Activated CD8-positive, alpha-beta T cell treated with anti-CD3 and anti-CD28 coated beads, Interleukin-2, amount 10 ng/mL, durations not matched to agents 7 days and 5 days (primary cell): ENCODE measurements at regions of chr11 and their contacts with region 1.

Region 1: DNA sequence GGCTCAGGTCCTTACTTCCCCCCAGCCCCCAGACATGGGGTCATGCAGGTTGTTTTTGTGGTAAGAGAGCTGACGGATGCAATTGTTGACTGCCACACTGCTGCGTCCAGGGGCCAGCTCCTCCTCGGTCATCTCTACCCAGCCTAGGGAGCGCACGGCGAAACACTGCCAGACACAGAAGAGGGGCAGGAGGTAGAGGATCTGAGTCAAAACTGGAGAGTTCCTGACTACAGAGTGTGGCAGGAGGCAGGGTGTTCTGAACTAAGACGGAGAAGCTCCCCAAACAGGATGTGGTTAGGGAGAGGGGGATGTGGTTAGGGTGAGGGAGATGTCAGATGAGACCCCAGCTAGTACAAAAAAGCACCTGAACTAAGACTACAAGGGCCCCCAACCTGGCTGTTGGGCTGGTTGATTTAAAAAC is 12.3 kb downstream of the SMPD1 start:
- DNase-seq: peak; percentile 95
- ATAC-seq: peak; percentile 93
- H3K4me3 Mint-ChIP-seq: peak overlapping the region; percentile 81
- H3K27ac Mint-ChIP-seq: peak overlapping the region; percentile 98
- H3K4me1 Mint-ChIP-seq: peaks cover 66% of the 10 kb centered on the region
- H3K27me3 Mint-ChIP-seq: no peaks in the 10 kb centered on the region

Region 2: GRCh38 chr11:6389921-6390724 is 12.4 kb before region 1 on chr11 and contains the start of gene SMPD1:
- CTCF ChIA-PET with region 1: interaction called, 11 read pairs
- POLR2A ChIA-PET with region 1: interaction called, 55 read pairs
- DNase-seq: peak; percentile 95
- ATAC-seq: peak; percentile 92
- H3K4me3 Mint-ChIP-seq: peak within 1 kb of the TSS; percentile 89
- H3K27ac Mint-ChIP-seq: peak within 1 kb of the TSS; percentile 95
- H3K4me1 Mint-ChIP-seq: peaks cover 57% of the 10 kb centered on the region
- H3K27me3 Mint-ChIP-seq: peaks cover 2% of the 10 kb centered on the region
- total RNA-seq, gene SMPD1: 35.5 to 37.1 TPM

Region 3: GRCh38 chr11:6413791-6414201 is 11.2 kb after region 1 on chr11:
- CTCF ChIA-PET with region 1: interaction called, 18 read pairs
- POLR2A ChIA-PET with region 1: interaction called, 27 read pairs
- DNase-seq: peak; percentile 60
- ATAC-seq: peak; percentile 71
- H3K4me3 Mint-ChIP-seq: no peak overlapping the region
- H3K27ac Mint-ChIP-seq: no peak overlapping the region
- H3K4me1 Mint-ChIP-seq: peaks cover 4% of the 10 kb centered on the region
- H3K27me3 Mint-ChIP-seq: no peaks in the 10 kb centered on the region

Region 4: DNA sequence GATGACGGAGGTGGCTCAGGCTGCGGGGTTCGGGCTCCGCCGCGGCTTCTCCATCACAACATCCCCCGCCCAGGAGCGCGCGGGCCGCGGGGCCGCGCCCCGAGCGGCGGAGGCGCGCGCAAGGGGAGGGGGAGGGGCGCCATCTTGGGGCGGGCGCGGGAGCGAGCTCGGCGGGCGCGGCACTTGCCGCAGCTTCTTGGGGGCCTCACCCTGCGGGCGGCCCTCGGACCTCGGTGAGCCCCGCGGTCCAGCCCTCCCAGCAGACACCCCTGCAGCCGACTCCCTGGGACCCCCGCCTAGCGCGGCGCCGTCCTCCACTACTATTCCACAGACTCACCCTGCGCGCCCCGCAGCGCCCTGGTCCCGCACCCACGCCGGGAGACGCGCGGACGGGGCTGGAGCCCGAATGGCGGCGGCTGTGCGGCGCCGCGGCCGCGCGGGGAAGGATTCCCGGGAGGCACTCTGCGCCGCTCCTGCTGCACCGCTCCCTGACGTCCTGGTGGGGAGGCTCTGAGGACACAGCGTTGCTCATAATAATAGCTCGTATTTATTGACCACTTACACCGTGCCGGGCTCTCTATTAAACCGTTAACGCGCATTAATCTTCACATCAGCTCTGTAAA is 16.5 kb after region 1 on chr11 and contains the start of gene APBB1:
- CTCF ChIA-PET with region 1: interaction called, 18 read pairs
- POLR2A ChIA-PET with region 1: interaction called, 27 read pairs
- DNase-seq: peak; percentile 72
- ATAC-seq: peak; percentile 73
- H3K4me3 Mint-ChIP-seq: peak within 1 kb of the TSS; percentile 75
- H3K27ac Mint-ChIP-seq: peak within 1 kb of the TSS; percentile 30
- H3K4me1 Mint-ChIP-seq: peaks cover 5% of the 10 kb centered on the region
- H3K27me3 Mint-ChIP-seq: peaks cover 25% of the 10 kb centered on the region
- total RNA-seq, gene APBB1: 51.7 to 52.4 TPM

Region 5: DNA sequence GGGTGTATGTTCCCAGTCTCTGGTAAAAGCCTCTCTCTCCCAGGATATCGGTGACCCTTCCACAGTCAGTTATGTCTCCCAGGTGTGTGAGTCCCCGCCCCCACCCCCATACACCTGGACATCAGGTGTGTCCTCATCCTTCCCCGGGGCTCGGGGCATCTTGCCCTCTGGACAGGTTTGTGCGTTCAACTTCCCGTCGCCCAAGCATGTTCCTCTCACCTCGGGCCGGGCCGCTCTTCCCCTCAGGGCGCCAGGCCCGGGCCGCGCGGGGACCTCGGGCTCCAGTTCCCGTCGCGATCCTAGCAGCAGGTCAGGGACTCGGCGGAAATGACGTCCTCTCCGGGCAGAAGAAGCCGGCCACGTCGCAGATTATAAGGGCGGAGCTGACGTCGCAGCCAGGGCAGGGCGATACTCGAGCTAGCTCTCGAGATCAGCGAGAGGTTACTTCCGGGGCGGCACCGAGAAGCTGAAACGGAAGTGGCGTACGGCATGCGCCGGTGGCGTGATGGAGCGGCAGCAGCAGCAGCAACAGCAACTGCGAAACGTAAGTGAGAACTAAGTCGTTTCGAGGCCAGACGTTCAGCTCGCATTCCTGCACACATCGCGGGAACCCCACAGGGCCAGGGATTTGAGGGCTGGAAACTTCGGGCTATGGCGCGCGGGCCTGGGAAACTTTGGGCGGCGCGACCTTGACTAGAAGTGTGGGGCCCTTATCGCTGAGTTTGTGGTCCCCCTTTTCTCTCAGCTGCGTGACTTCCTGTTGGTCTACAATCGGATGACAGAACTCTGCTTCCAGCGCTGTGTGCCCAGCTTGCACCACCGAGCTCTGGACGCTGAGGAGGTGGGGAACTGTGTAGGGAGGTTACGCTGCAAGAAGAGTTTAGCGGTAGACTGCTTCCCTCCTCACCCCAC is 78.7 kb after region 1 on chr11 and contains the starts of genes ARFIP2 and TIMM10B:
- CTCF ChIA-PET with region 1: no interaction called
- POLR2A ChIA-PET with region 1: interaction called, 16 read pairs
- DNase-seq: peak; percentile 99
- ATAC-seq: peak; percentile 96
- H3K4me3 Mint-ChIP-seq: peak within 1 kb of the TSS; percentile 94
- H3K27ac Mint-ChIP-seq: peak within 1 kb of the TSS; percentile 97
- H3K4me1 Mint-ChIP-seq: peaks cover 38% of the 10 kb centered on the region
- H3K27me3 Mint-ChIP-seq: no peaks in the 10 kb centered on the region
- total RNA-seq, gene ARFIP2: 38.6 to 39.8 TPM
- total RNA-seq, gene TIMM10B: 34.1 to 35.4 TPM